Activated CD8-positive, alpha-beta T cell treated with anti-CD3 and anti-CD28 coated beads, Interleukin-2, amount 10 ng/mL, durations not matched to agents 7 days and 5 days (primary cell): ENCODE measurements at regions of chr4 and their contacts with region 1.

Region 1: DNA sequence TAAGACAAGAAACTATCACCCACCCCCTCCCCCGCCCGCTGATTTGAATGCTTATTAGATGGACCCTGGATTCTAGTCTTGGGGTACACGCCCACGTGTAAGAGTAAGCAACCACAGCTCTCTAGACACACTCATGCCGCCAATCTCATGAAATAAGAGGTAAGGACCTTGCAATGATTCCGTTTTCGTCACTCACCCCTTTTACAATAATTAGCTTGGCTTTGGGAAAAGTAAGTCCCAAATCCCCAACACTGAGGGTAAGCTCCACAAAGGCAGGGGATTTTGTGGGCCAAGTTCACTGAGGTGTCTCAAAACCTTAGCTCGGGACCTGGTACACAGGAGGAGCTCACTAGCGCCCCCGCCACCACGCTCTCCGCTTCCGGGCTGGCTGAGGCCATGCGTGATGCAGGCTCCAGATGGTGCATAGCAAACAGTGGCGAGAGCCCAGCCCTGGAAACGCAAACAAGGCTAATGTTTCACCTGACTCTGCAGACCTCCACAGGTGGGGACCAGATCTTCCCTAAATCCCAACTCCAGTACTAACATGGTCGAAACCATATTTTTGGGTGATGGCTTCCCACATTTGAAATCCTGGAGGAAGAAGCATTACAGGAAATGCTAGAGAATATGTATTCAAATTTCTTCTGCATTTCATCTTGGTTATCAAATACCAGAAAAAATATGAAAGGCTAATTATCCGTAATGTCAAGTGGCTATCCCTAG is 4.1 kb downstream of the PLAC8 start:
- DNase-seq: peak; percentile 94
- ATAC-seq: peak; percentile 80
- H3K4me3 Mint-ChIP-seq: peak overlapping the region; percentile 93
- H3K27ac Mint-ChIP-seq: peak overlapping the region; percentile 96
- H3K4me1 Mint-ChIP-seq: peaks cover 56% of the 10 kb centered on the region
- H3K27me3 Mint-ChIP-seq: no peaks in the 10 kb centered on the region

Region 2: GRCh38 chr4:82913305-82913704 is 197.1 kb before region 1 on chr4:
- CTCF ChIA-PET with region 1: no interaction called
- POLR2A ChIA-PET with region 1: no interaction called
- DNase-seq: no peak
- ATAC-seq: no peak
- H3K4me3 Mint-ChIP-seq: no peak overlapping the region
- H3K27ac Mint-ChIP-seq: no peak overlapping the region
- H3K4me1 Mint-ChIP-seq: no peaks in the 10 kb centered on the region
- H3K27me3 Mint-ChIP-seq: no peaks in the 10 kb centered on the region

Region 3: DNA sequence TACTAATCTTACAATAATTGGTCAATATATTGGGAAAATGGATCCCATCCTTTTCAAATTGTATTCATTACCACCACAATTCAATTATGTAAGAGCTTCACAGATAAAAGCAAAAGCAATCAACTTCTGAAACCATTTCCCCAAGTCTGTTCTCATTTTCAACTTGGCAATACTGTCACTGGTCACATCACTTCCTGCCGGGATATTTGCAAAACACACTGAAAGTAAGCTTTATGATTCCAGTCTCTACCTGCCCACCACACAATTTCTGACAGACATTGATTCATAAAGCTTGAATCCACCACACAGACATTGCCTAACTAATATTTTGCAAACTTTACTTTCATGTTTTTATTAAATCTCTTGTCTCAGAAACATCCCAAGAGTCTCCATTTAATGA is 153.3 kb before region 1 on chr4:
- CTCF ChIA-PET with region 1: no interaction called
- POLR2A ChIA-PET with region 1: no interaction called
- DNase-seq: no peak
- ATAC-seq: no peak
- H3K4me3 Mint-ChIP-seq: no peak overlapping the region
- H3K27ac Mint-ChIP-seq: peak overlapping the region; percentile 67
- H3K4me1 Mint-ChIP-seq: peaks cover 12% of the 10 kb centered on the region
- H3K27me3 Mint-ChIP-seq: no peaks in the 10 kb centered on the region

Region 4: GRCh38 chr4:83074086-83074704 is 36.2 kb before region 1 on chr4:
- CTCF ChIA-PET with region 1: interaction called, 28 read pairs
- POLR2A ChIA-PET with region 1: interaction called, 8 read pairs
- DNase-seq: peak; percentile 84
- ATAC-seq: peak; percentile 91
- H3K4me3 Mint-ChIP-seq: peak overlapping the region; percentile 59
- H3K27ac Mint-ChIP-seq: peak overlapping the region; percentile 48
- H3K4me1 Mint-ChIP-seq: peaks cover 17% of the 10 kb centered on the region
- H3K27me3 Mint-ChIP-seq: no peaks in the 10 kb centered on the region

Region 5: GRCh38 chr4:83093130-83093529 is 17.3 kb before region 1 on chr4:
- CTCF ChIA-PET with region 1: interaction called, 22 read pairs
- POLR2A ChIA-PET with region 1: interaction called, 4 read pairs
- DNase-seq: no peak
- ATAC-seq: no peak
- H3K4me3 Mint-ChIP-seq: no peak overlapping the region
- H3K27ac Mint-ChIP-seq: no peak overlapping the region
- H3K4me1 Mint-ChIP-seq: peaks cover 4% of the 10 kb centered on the region
- H3K27me3 Mint-ChIP-seq: no peaks in the 10 kb centered on the region

Region 6: GRCh38 chr4:83217721-83218522 is 107.5 kb after region 1 on chr4:
- CTCF ChIA-PET with region 1: interaction called, 47 read pairs
- POLR2A ChIA-PET with region 1: interaction called, 21 read pairs
- DNase-seq: peak; percentile 86
- ATAC-seq: peak; percentile 91
- H3K4me3 Mint-ChIP-seq: peak overlapping the region; percentile 80
- H3K27ac Mint-ChIP-seq: peak overlapping the region; percentile 87
- H3K4me1 Mint-ChIP-seq: peaks cover 76% of the 10 kb centered on the region
- H3K27me3 Mint-ChIP-seq: no peaks in the 10 kb centered on the region

Region 7: GRCh38 chr4:83252782-83253405 is 142.5 kb after region 1 on chr4:
- CTCF ChIA-PET with region 1: interaction called, 43 read pairs
- POLR2A ChIA-PET with region 1: interaction called, 8 read pairs
- DNase-seq: peak; percentile 87
- ATAC-seq: peak; percentile 82
- H3K4me3 Mint-ChIP-seq: no peak overlapping the region
- H3K27ac Mint-ChIP-seq: peak overlapping the region; percentile 64
- H3K4me1 Mint-ChIP-seq: peaks cover 37% of the 10 kb centered on the region
- H3K27me3 Mint-ChIP-seq: no peaks in the 10 kb centered on the region